ENCODE measurements at regions of chr17 and their contacts with region 1.

Region 1: DNA sequence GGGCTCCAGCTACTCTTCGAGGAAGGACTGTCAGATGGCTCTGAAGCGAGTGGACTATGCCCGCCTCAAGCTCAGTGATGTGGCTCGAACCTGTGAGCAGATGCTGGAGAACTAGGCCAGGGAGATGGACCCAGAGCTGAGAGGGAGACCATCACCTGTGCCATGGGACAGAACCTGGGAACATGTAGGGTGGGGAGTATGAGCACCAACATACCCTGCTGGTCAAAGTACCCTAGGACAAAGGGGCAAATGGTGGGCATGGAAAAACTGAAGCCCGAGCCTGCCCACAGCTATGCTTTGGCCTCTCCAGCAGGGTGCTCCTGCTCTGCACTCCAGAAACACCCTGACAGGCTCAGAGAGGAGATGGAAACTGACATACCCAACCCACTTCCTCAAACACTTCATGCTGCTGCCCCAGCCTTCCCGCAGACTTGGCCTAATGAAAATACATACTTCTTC is 1.9 kb downstream of the MED11 start:
- DNase-seq: peak; percentile 89
- ATAC-seq: peak; percentile 59
- H3K4me3 ChIP-seq: no peak overlapping the region
- H3K4me3 Mint-ChIP-seq: peak overlapping the region; percentile 65
- H3K27ac ChIP-seq: peak overlapping the region; percentile 66 to 68
- H3K27ac Mint-ChIP-seq: peak overlapping the region; percentile 93
- H3K4me1 ChIP-seq: peaks cover 33 to 47% of the 10 kb centered on the region in 2 donors
- H3K4me1 Mint-ChIP-seq: peaks cover 49% of the 10 kb centered on the region
- H3K27me3 ChIP-seq: no peaks in the 10 kb centered on the region
- H3K27me3 Mint-ChIP-seq: no peaks in the 10 kb centered on the region
- CTCF ChIP-seq: peak; percentile 76

Region 2: GRCh38 chr17:4789901-4790704 is 57.0 kb after region 1 on chr17:
- CTCF ChIA-PET with region 1: interaction called, 26 read pairs
- POLR2A ChIA-PET with region 1: interaction called, 5 read pairs
- intact Hi-C with region 1: loop called (anchors 1 kb)
- DNase-seq: peak; percentile 89
- ATAC-seq: peak; percentile 94
- H3K4me3 ChIP-seq: peak overlapping the region; percentile 27 to 70 (median 63)
- H3K4me3 Mint-ChIP-seq: peak overlapping the region; percentile 94
- H3K27ac ChIP-seq: peak overlapping the region in 1 of 2 donors; percentile 53
- H3K27ac Mint-ChIP-seq: peak overlapping the region; percentile 93
- H3K4me1 ChIP-seq: peaks cover 28 to 33% of the 10 kb centered on the region in 2 donors
- H3K4me1 Mint-ChIP-seq: peaks cover 30% of the 10 kb centered on the region
- H3K27me3 ChIP-seq: peaks cover 0 to 44% (median 27%) of the 10 kb centered on the region in 4 experiments
- H3K27me3 Mint-ChIP-seq: peaks cover 27% of the 10 kb centered on the region
- CTCF ChIP-seq: peak; percentile 81

Region 3: DNA sequence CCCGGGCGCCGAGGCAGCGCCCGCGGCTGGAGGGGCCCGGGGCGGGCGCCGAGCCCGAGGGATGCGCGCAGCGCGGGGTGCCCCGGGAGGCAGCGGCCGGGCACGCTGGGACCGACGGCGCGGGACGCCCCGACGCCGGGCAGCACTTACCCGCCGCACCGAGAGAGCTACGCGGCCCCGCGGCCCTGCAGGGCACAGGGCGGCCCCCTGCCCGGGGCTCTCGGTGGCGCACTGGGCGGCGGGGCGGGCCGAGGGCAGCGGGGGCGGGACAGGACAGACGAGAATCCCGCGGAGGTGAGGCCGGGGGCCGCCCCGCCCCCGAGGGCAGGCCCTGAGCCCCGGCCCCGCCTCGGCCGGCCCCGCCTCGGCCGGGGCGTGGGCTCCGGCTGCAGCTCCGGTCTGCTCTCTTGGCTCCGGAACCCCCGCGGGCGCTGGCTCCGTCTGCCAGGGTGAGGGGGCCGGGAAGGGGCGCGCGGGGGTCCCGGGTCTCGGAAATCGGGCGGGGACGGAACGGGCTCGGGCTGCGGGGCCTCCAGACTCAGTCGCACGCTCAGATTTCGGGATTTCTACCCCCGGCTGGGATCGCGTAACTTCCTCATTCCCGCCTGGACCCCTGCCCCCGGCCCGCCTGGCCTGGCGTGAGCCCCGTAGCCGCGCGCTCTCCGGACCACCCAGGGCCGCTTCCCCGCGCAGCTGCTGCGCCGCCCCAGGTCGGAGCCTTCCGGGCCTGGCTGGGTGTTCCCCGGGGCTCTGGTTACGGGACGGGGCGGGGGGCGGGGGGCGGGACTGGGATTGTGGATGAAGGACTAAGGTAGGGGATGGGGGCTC is 73.9 kb after region 1 on chr17 and contains the start of gene PLD2:
- CTCF ChIA-PET with region 1: no interaction called
- POLR2A ChIA-PET with region 1: no interaction called
- intact Hi-C with region 1: loop called (anchors 1 kb)
- DNase-seq: peak; percentile 89
- ATAC-seq: peak; percentile 99
- H3K4me3 ChIP-seq: peak within 1 kb of the TSS; percentile 56 to 89 (median 72)
- H3K4me3 Mint-ChIP-seq: peak within 1 kb of the TSS; percentile 86
- H3K27ac ChIP-seq: peak within 1 kb of the TSS; percentile 55 to 79
- H3K27ac Mint-ChIP-seq: peak within 1 kb of the TSS; percentile 78
- H3K4me1 ChIP-seq: peaks cover 9 to 13% of the 10 kb centered on the region in 2 donors
- H3K4me1 Mint-ChIP-seq: peaks cover 14% of the 10 kb centered on the region
- H3K27me3 ChIP-seq: no peaks in the 10 kb centered on the region
- H3K27me3 Mint-ChIP-seq: no peaks in the 10 kb centered on the region
- CTCF ChIP-seq: no peak
- total RNA-seq, gene PLD2: 69.2 and 72.1 TPM in 2 replicates

Region 4: GRCh38 chr17:4881761-4882555 is 148.9 kb after region 1 on chr17:
- CTCF ChIA-PET with region 1: interaction called, 10 read pairs
- POLR2A ChIA-PET with region 1: no interaction called
- intact Hi-C with region 1: loop called (anchors 1 kb)
- DNase-seq: peak; percentile 78
- ATAC-seq: peak; percentile 92
- H3K4me3 ChIP-seq: no peak overlapping the region
- H3K4me3 Mint-ChIP-seq: no peak overlapping the region
- H3K27ac ChIP-seq: no peak overlapping the region
- H3K27ac Mint-ChIP-seq: no peak overlapping the region
- H3K4me1 ChIP-seq: peaks cover 0 to 6% of the 10 kb centered on the region in 2 donors
- H3K4me1 Mint-ChIP-seq: peaks cover 3% of the 10 kb centered on the region
- H3K27me3 ChIP-seq: no peaks in the 10 kb centered on the region
- H3K27me3 Mint-ChIP-seq: no peaks in the 10 kb centered on the region
- CTCF ChIP-seq: peak; percentile 83

Region 5: DNA sequence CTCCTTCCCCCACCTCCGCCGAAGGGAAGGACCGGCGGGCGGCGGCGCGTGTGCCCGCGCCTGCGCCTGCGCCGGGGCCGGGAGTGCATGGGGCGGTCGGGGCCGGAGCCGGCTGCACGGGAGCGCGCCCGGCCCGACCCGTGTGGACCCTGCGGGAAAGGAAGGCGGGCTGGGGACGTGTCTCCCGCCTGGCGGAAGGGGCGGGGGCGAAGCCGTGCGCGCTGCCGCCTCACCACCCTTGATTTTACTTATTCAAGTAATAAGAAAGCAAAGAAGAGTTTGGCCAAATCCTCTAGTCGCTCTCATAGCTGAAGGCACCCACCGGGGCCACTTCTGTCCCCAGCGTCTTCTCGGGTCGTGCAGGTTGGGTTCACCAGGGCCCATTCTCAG is 215.8 kb after region 1 on chr17:
- CTCF ChIA-PET with region 1: no interaction called
- POLR2A ChIA-PET with region 1: no interaction called
- intact Hi-C with region 1: loop called (anchors 5 kb)
- DNase-seq: peak; percentile 90
- ATAC-seq: peak; percentile 50
- H3K4me3 ChIP-seq: peak overlapping the region; percentile 59 to 99 (median 96)
- H3K4me3 Mint-ChIP-seq: peak overlapping the region; percentile 98
- H3K27ac ChIP-seq: peak overlapping the region; percentile 73 to 93
- H3K27ac Mint-ChIP-seq: peak overlapping the region; percentile 99
- H3K4me1 ChIP-seq: peaks cover 37 to 45% of the 10 kb centered on the region in 2 donors
- H3K4me1 Mint-ChIP-seq: peaks cover 46% of the 10 kb centered on the region
- H3K27me3 ChIP-seq: no peaks in the 10 kb centered on the region
- H3K27me3 Mint-ChIP-seq: no peaks in the 10 kb centered on the region
- CTCF ChIP-seq: no peak

Region 6: DNA sequence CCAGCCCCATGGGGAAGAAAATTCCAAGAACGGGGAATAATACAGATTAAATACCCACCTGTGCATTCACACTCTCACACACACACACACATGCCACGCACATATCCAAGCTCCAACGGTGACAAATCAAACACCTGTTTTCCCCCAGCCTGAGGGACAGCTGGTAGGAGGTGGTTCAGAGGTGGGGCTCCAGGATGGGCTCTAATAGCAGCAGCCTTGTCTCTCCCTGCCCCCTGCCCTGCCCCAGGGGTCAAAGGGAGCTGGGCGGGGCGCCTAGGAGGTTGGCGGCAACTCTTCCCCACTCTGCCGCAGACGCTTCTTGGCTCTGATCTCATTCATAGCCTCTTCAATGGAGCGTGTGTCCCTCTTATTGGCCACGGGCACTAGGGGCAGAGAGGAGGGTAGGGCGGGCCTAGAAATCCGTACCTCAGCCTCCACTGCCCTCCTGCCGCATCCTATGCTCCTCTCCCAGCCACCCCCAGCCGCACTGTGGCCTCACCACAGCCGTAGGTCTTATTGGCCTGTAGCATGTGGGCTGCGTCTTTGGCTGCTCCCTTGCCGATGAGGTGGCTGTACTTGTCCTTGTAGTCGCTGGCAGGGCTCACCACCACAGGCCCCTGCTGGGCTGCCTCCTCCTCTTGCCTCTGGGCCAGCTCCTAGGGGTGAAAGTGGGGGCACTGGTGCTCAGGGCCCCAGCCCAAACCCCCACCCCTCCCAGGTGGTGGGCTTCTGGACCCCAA is 226.3 kb after region 1 on chr17:
- CTCF ChIA-PET with region 1: no interaction called
- POLR2A ChIA-PET with region 1: no interaction called
- intact Hi-C with region 1: no loop called
- DNase-seq: no peak
- ATAC-seq: no peak
- H3K4me3 ChIP-seq: no peak overlapping the region
- H3K4me3 Mint-ChIP-seq: no peak overlapping the region
- H3K27ac ChIP-seq: no peak overlapping the region
- H3K27ac Mint-ChIP-seq: no peak overlapping the region
- H3K4me1 ChIP-seq: no peaks in the 10 kb centered on the region
- H3K4me1 Mint-ChIP-seq: no peaks in the 10 kb centered on the region
- H3K27me3 ChIP-seq: no peaks in the 10 kb centered on the region
- H3K27me3 Mint-ChIP-seq: no peaks in the 10 kb centered on the region
- CTCF ChIP-seq: no peak